ENCODE measurements at regions of chr2 and their contacts with region 1.

Region 1: DNA sequence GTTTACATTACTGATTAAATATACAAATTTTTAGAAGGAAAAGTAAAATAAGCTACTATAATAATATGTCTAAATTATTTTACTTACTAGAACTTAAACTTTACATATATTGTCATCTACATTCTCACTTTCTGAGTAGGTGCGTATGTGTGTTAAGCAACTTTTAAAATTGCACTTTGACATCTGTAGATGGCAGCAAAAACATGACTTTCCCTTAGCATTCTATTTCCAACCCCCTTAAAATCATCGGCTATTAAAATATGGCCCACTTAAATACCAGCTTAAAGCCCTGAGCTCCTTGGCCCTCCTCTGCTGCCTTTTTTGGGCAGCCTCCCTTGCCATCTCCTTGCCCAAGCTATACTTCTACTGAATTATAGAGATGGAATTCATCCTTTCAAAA is 78.0 kb downstream of the UPP2 start:
- DNase-seq: peak; percentile 51
- H3K4me3 ChIP-seq: no peak overlapping the region
- H3K27ac ChIP-seq: no peak overlapping the region
- H3K4me1 ChIP-seq: peaks cover 12% of the 10 kb centered on the region
- H3K27me3 ChIP-seq: no peaks in the 10 kb centered on the region
- CTCF ChIP-seq: peak; percentile 62

Region 2: DNA sequence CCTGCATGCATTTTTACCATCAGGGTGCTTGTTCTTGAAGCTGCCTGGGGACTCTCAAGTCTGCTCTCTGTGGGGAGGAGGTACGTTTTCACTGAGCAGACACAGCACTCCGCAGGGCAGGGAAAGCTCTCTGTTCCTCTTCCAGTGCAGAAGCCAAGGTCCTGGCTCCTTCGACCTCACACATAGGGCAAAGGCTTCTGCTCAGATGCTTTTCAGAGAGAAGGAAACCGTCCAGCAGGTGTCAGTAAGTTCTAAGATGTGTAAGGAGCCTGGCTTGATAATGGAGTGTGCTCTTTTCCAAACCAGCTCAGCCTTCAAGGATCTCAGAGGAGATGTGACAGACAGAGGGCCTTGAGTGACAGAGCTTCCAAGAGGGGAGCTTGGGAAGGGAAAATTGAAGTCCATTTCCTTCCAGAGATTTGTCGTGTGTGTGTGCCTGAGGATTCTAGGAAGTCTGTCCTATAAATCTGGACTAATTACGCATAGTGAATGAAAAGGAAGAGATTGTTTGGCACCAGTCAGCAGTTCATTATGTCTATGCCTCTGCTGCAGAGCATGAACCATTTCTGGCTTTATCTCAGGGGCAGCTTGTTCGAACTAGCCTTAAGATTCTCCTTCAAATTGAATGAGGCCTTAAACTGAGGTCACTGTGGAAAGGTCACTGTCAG is 145.3 kb before region 1 on chr2:
- CTCF ChIA-PET with region 1: no interaction called
- POLR2A ChIA-PET with region 1: no interaction called
- intact Hi-C with region 1: loop called (anchors 5 kb)
- DNase-seq: peak; percentile 87
- H3K4me3 ChIP-seq: no peak overlapping the region
- H3K27ac ChIP-seq: no peak overlapping the region
- H3K4me1 ChIP-seq: peaks cover 18% of the 10 kb centered on the region
- H3K27me3 ChIP-seq: no peaks in the 10 kb centered on the region
- CTCF ChIP-seq: peak; percentile 74

Region 3: DNA sequence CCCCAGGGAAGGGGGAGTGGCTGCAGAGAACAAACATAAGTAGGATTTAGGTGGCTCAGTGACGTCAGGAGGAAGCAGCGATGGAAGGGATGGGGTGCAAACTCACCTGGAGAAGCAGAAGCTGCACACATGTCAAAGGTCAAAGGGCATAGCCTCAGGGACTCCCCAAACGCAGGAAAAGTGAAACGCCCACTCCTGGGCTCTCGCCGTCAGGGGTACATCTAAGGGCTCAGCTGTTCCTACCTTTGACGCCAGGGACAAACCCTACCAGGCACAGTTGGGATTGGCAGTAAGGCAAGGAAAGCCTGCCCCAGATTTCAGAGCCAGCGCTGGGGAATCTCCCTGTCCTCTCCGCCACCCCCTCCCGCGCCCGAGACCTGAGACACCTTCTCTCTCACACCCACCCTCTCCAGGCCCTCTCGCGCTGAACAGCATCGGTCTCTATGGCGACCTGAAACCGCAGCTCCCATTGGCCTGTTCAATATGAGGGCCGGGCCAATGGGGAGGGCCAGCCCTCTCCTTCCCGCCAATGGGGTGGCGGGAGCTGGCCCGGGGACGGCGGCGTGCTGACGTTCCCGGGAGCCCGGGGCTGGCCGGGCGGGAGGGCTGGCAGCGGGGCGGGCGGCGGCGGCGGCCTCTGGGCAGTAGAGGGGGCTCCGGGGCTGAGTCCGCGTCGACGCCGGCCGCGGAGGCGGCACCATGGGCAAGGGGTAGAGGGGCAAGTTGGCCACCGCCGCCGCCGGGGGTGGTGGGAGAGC is 276.8 kb after region 1 on chr2 and contains the starts of genes CCDC148 and PKP4:
- CTCF ChIA-PET with region 1: no interaction called
- POLR2A ChIA-PET with region 1: no interaction called
- intact Hi-C with region 1: loop called (anchors 5 kb)
- DNase-seq: peak; percentile 97
- H3K4me3 ChIP-seq: peak within 1 kb of the TSS; percentile 96
- H3K27ac ChIP-seq: peak within 1 kb of the TSS; percentile 78
- H3K4me1 ChIP-seq: peaks cover 30% of the 10 kb centered on the region
- H3K27me3 ChIP-seq: no peaks in the 10 kb centered on the region
- CTCF ChIP-seq: no peak
- total RNA-seq, gene CCDC148: 0.90 and 0.92 TPM in 2 replicates
- total RNA-seq, gene PKP4: 67.7 and 79.3 TPM in 2 replicates

Region 4: DNA sequence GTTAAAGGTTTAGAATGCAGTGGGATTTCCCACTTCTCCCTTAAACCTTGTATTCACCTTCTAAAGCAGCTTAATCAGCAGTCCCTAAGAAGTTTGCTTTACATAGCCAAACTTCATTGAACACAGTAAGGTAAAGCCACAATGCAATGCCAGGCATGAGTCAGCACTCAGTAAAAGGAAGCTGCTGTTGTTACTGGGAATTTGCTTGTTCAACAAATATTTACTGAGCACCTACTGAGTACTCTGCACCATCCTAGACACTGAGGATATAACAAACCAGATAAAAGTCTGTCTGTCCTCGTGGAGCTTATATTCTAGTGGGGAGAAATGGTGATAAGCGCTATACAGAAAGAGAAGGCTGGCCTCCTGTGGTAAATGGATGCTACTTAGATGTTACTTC is 439.8 kb after region 1 on chr2:
- CTCF ChIA-PET with region 1: no interaction called
- POLR2A ChIA-PET with region 1: no interaction called
- intact Hi-C with region 1: loop called (anchors 5 kb)
- DNase-seq: peak; percentile 18
- H3K4me3 ChIP-seq: no peak overlapping the region
- H3K27ac ChIP-seq: peak overlapping the region; percentile 31
- H3K4me1 ChIP-seq: peaks cover 10% of the 10 kb centered on the region
- H3K27me3 ChIP-seq: no peaks in the 10 kb centered on the region
- CTCF ChIP-seq: no peak

Region 5: GRCh38 chr2:158745044-158745865 is 565.6 kb after region 1 on chr2:
- CTCF ChIA-PET with region 1: interaction called, 5 read pairs
- POLR2A ChIA-PET with region 1: no interaction called
- intact Hi-C with region 1: loop called (anchors 2 kb)
- DNase-seq: peak; percentile 68
- H3K4me3 ChIP-seq: no peak overlapping the region
- H3K27ac ChIP-seq: no peak overlapping the region
- H3K4me1 ChIP-seq: no peaks in the 10 kb centered on the region
- H3K27me3 ChIP-seq: no peaks in the 10 kb centered on the region
- CTCF ChIP-seq: peak; percentile 67

Measured in A673 (cell line).